ENCODE measurements at regions of chr19 and their contacts with region 1.

Region 1: GRCh38 chr19:39792999-39793546 is 14.4 kb downstream of the LEUTX start:
- DNase-seq: peak; percentile 79 to 82
- H3K4me3 ChIP-seq: peak overlapping the region; percentile 44 to 45
- H3K27ac ChIP-seq: no peak overlapping the region
- H3K4me1 ChIP-seq: no peaks in the 10 kb centered on the region
- H3K27me3 ChIP-seq: peaks cover 0 to 2% of the 10 kb centered on the region in 2 donors
- CTCF ChIP-seq: peak; percentile 84 to 85

Region 2: GRCh38 chr19:39846176-39846677 is 53.2 kb after region 1 on chr19 and contains the start of gene FBL:
- intact Hi-C with region 1: loop called (anchors 5 kb)
- DNase-seq: peak; percentile 93 to 97
- H3K4me3 ChIP-seq: peak within 1 kb of the TSS; percentile 81 to 93
- H3K27ac ChIP-seq: peak within 1 kb of the TSS; percentile 81 to 91
- H3K4me1 ChIP-seq: peaks cover 0 to 59% (median 29%) of the 10 kb centered on the region in 4 donors
- H3K27me3 ChIP-seq: no peaks in the 10 kb centered on the region
- CTCF ChIP-seq: no peak

Region 3: GRCh38 chr19:39970675-39971379 is 177.8 kb after region 1 on chr19 and contains the start of gene PSMC4:
- intact Hi-C with region 1: loop called (anchors 10 kb)
- DNase-seq: peak; percentile 98 to 99
- H3K4me3 ChIP-seq: peak within 1 kb of the TSS; percentile 66 to 78
- H3K27ac ChIP-seq: peak within 1 kb of the TSS; percentile 90 to 91
- H3K4me1 ChIP-seq: peaks cover 4 to 21% (median 19%) of the 10 kb centered on the region in 4 donors
- H3K27me3 ChIP-seq: no peaks in the 10 kb centered on the region
- CTCF ChIP-seq: peak; percentile 66 to 69

Region 4: GRCh38 chr19:40221858-40222837 is 429.1 kb after region 1 on chr19:
- intact Hi-C with region 1: loop called (anchors 5 kb)
- DNase-seq: peak; percentile 81 to 91
- H3K4me3 ChIP-seq: no peak overlapping the region
- H3K27ac ChIP-seq: no peak overlapping the region
- H3K4me1 ChIP-seq: peaks cover 0 to 30% (median 12%) of the 10 kb centered on the region in 4 donors
- H3K27me3 ChIP-seq: peaks cover 8 to 73% of the 10 kb centered on the region in 2 donors
- CTCF ChIP-seq: peak; percentile 92 to 93